ENCODE measurements at regions of chr1 and their contacts with region 1.

Region 1: DNA sequence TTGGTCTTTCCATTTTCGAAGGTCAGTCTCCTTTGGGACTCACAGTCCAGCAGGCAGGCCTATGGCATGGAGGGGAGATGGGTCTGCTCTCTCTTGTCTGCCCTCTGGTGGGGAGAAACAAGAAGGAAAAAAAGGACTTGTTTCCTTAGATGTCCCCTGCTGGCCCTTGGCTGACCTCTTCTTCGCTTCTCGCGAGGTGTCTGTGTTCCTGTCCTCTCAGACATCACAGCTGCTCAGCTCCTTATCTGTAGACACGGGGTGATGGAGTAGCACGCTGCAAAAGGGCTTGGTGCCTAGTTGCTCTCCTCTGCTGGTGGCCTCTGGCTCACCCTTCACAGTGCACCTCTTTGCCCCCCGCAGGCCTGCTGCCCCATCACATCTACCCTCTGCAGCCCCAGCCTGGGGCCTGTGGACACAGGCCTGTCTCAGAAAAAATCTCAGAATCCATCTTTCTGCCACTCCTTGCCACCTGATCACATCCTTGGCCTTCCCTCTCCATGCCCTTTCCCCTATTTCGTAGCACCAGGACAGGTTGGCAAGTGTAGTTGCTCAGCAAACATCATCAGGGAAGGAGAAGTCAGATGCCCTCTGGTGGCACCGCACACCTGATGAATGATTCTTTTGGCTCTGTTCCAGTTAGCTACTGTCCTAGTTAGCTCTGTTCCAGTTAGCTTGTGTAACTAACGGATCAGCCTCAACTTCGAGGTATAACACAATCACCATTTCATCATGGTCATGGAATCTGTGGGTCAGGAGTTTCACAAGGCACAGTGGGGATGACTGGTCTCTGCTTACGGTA is 18.7 kb upstream of the AK2 start:
- DNase-seq: peak; percentile 88
- ATAC-seq: peak; percentile 93

Region 2: DNA sequence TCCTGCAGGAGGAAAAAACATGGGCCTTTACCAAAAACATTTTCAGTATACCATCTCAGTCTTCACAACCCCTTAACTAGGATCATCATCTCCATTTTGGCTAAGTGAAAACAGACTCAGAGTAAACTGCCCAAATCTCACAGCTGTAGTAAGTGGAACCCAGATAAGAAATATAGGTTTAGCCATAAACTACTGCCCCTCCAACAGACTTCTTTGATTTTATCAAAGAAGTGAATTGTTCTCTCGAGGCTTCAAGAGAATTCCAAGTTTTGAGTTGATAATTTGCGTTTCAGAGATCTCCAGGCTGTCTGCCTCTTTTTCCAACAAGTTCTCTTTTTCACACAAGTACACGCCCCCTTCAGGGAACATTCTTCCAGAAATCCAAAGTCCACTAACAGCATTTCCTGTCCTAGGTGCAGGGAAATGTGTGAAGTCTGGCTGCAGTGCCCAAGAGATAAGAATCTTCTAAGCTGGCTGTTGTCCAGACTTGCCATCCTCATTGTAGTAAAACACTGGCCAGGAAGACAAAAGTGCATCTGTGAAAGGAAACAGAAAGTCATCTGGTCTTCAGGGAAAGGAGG is 121.6 kb before region 1 on chr1:
- intact Hi-C with region 1: loop called (anchors 5 kb)
- DNase-seq: no peak
- ATAC-seq: peak; percentile 48

Region 3: GRCh38 chr1:33176362-33176850 is 121.0 kb after region 1 on chr1:
- intact Hi-C with region 1: no loop called
- DNase-seq: no peak
- ATAC-seq: no peak

Measured in Right ventricle myocardium superior (tissue), 1 donor.